Heart left ventricle (tissue), 16 donors: ENCODE measurements at regions of chr5 and their contacts with region 1.

Region 1: DNA sequence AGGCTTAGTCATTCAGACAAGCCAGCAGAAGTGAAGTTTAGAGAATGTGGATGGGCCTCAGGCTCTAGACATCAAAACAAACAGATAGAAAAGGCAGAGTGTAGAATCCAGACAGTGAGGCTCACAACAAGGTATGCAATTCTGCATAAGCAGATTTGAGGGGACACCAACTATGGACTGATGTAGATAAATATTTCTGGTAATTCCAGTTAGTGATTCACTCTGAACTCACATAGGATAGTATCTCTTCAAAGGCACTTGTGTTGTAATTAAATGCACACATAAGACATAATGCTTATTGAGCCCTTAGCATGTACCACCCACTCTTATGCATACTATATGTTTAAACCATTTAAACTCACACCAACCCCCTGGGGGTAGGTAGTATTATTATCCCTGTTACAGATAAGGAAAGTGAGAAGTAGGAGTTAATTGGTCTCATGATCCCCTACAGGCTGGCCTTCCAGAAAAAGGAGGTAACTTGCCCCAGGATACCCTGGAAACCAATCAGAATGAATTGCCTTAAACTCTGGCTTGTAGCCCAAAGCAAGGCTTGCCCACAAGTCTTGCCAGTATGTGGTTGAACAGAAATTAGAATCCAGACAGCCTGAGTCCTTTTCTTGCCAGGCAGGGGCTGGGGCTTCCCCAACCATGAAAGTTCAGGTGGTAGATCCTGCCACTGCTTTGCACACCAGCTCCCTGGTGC is 39.5 kb upstream of the HSPB3 start:
- DNase-seq: no peak
- ATAC-seq: no peak
- H3K4me3 ChIP-seq: no peak overlapping the region
- H3K27ac ChIP-seq: no peak overlapping the region
- H3K4me1 ChIP-seq: peaks cover 0 to 8% (median 0%) of the 10 kb centered on the region in 12 donors
- H3K27me3 ChIP-seq: no peaks in the 10 kb centered on the region
- CTCF ChIP-seq: no peak
- POLR2A ChIP-seq: no peak

Region 2: DNA sequence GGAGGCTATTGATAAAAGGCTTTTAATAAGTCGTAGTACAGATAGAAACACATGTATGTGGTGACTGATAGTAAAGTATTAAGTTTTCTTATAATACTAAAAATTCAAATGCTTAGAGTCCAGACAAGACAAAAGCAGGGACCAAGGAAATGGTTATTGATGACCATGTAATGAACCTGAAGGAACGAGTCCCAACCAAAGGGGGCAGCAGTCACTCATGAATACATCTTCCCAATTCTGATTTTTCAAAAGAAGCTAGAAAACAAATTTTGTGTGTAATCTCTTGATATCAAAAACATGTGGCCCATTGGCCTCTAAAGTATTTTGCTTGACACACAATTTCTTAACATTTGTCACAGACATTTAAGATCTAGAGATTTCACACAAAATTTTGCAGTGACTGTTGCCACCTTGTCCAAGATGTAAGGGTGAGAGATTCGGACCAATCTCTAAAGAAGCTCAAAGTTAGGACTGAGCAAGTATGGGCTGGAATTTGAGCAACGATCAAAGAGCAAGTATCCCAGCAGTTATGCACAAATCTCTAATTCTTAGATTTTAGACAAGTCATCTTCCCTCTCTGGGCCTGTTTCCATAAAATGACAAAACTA is 172.5 kb before region 1 on chr5:
- intact Hi-C with region 1: loop called in 4 of 10 experiments (anchors 2 to 5 kb)
- DNase-seq: peak in 1 of 5 donors; percentile 15
- ATAC-seq: peak in 1 of 4 donors; percentile 47
- H3K4me3 ChIP-seq: no peak overlapping the region
- H3K27ac ChIP-seq: peak overlapping the region in 1 of 12 donors; percentile 6
- H3K4me1 ChIP-seq: peaks cover 0 to 41% (median 8%) of the 10 kb centered on the region in 12 donors
- H3K27me3 ChIP-seq: no peaks in the 10 kb centered on the region
- CTCF ChIP-seq: peak; percentile 37 to 75 (median 65)
- POLR2A ChIP-seq: no peak

Region 3: DNA sequence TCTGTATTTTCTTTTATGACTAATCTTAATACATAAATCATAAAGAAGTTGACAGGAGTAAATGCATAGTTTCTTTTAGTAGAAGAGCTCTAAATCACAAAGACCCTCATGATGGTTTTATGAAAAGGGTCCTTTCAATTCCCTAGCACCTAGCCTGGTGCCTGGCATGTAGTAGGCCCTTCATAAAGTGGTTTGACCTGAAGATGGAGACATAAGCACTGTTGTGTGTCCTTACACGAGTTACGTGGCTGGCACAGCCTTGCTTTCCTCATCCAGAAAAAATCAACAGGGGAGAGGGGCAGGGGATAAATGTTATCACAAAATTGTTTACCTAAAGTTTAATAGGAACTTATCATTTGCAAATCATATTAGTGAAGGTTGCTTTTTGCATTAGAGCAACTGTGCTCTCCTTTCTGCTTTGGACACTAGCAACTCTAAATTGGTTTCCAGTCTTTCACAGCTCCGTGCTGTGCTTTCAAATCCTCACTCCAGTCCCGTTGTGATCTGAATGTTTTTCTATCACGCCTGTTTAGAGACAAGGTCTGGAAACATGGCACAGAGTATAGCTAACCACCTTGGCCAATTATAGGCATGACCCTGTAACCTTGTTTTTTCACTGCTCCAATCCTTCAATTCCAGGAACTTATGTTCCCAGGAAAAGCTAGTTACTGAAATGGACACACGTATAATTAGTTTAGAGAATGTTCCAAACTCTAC is 161.4 kb before region 1 on chr5:
- intact Hi-C with region 1: loop called in 8 of 10 experiments (anchors 2 to 5 kb)
- DNase-seq: peak in 2 of 5 donors; percentile 31 to 38
- ATAC-seq: peak; percentile 78 to 91 (median 88)
- H3K4me3 ChIP-seq: peak overlapping the region in 9 of 12 donors; percentile 17 to 38 (median 27)
- H3K27ac ChIP-seq: peak overlapping the region; percentile 15 to 73 (median 42)
- H3K4me1 ChIP-seq: peaks cover 0 to 60% (median 25%) of the 10 kb centered on the region in 12 donors
- H3K27me3 ChIP-seq: no peaks in the 10 kb centered on the region
- CTCF ChIP-seq: peak in 11 of 12 donors; percentile 7 to 67 (median 50)
- POLR2A ChIP-seq: no peak

Region 4: DNA sequence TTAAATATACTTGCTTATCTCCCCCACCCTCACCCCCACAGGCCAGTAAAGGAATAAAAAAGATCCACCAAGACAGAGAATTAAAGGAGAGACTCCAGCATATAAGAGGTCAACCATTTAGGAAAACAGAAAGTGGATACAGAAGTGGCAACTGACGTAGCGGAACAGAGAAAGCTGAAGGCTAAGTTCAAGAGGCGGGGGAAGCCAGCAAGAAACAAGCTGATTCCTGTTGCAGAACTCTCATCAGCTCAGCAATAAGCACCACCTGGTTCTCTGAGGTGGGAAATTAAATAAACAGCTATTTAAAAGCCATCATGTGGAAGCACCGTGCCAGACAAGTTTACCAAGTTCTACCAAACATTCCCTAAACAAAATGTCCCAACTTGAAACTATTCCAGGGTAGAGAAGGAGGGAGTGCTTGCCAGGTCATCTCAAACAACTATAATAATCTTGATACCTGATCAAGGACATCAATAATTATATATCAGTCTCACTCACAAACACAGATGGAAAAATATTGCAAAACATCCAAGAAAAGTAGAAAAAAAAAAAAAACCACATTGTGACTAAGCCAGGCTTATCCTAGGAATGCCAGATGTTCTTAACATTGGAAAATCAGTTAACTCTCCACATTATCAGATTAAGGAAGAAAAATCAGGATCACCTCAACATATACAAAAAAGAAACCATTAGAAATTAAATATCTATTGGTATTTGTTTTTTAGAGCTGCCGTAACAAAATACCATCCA is 98.4 kb before region 1 on chr5:
- intact Hi-C with region 1: loop called in 6 of 10 experiments (anchors 5 kb)
- DNase-seq: no peak
- ATAC-seq: no peak
- H3K4me3 ChIP-seq: no peak overlapping the region
- H3K27ac ChIP-seq: no peak overlapping the region
- H3K4me1 ChIP-seq: no peaks in the 10 kb centered on the region
- H3K27me3 ChIP-seq: peaks cover 0 to 4% (median 0%) of the 10 kb centered on the region in 9 donors
- CTCF ChIP-seq: no peak
- POLR2A ChIP-seq: no peak